ENCODE measurements at regions of chr10 and their contacts with region 1.

Region 1: DNA sequence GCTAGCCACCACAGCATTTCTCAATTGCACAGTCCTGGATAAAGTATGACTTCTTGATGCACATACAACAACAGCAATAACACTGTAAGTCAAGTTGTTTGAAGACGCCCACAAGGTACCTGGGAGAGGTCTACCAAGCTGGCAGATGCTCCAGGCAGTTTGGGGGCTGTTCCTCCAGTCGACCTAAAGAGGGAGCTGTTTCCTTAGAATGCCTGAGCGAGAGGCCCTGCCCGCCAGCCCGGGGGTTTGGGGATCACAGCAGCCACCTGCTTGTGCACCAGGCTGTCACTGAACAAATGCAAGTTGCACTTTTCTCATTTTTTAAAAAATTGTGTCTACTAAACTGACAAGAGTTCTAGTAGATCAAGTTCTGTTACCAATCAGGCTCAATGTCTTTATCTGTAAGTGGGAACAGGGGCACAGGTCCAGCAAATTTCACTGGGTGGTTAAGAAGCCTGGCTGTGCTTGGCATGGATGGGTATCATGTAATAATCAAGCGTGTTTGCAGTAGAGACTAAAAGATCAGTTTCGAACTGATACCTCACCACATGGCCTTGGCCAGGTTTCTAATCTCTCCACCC is 193.8 kb upstream of the ADO start:
- DNase-seq: peak; percentile 47
- ATAC-seq: peak; percentile 83
- H3K4me3 ChIP-seq: no peak overlapping the region
- H3K27ac ChIP-seq: no peak overlapping the region
- H3K4me1 ChIP-seq: peaks cover 9% of the 10 kb centered on the region
- H3K27me3 ChIP-seq: no peaks in the 10 kb centered on the region
- CTCF ChIP-seq: peak; percentile 87
- POLR2A ChIP-seq: no peak
- RAD21 ChIP-seq: peak; percentile 92

Region 2: GRCh38 chr10:62811159-62811875 is 200.6 kb after region 1 on chr10:
- CTCF ChIA-PET with region 1: interaction called, 18 read pairs
- POLR2A ChIA-PET with region 1: no interaction called
- dilution Hi-C with region 1: no loop called
- in situ Hi-C with region 1: loop called (anchors 5 kb)
- intact Hi-C with region 1: no loop called
- DNase-seq: no peak
- ATAC-seq: no peak
- H3K4me3 ChIP-seq: no peak overlapping the region
- H3K27ac ChIP-seq: no peak overlapping the region
- H3K4me1 ChIP-seq: peaks cover 7% of the 10 kb centered on the region; the same call in 1 of the 2 replicates
- H3K27me3 ChIP-seq: peaks cover 22% of the 10 kb centered on the region
- CTCF ChIP-seq: no peak
- POLR2A ChIP-seq: peak; percentile 0; the same call in 1 of the 2 replicates
- RAD21 ChIP-seq: no peak

Region 3: GRCh38 chr10:62816331-62817120 is 205.8 kb after region 1 on chr10 and contains the start of gene EGR2:
- CTCF ChIA-PET with region 1: interaction called, 18 read pairs
- POLR2A ChIA-PET with region 1: interaction called, 9 read pairs
- dilution Hi-C with region 1: no loop called
- in situ Hi-C with region 1: loop called (anchors 5 kb)
- intact Hi-C with region 1: loop called (anchors 1 kb)
- DNase-seq: peak; percentile 94
- ATAC-seq: peak; percentile 91
- H3K4me3 ChIP-seq: peak within 1 kb of the TSS; percentile 73
- H3K27ac ChIP-seq: peak within 1 kb of the TSS; percentile 53
- H3K4me1 ChIP-seq: peaks cover 7% of the 10 kb centered on the region; the same call in 1 of the 2 replicates
- H3K27me3 ChIP-seq: peaks cover 48% of the 10 kb centered on the region
- CTCF ChIP-seq: no peak
- POLR2A ChIP-seq: peak; percentile 50
- RAD21 ChIP-seq: no peak
- total RNA-seq, gene EGR2: 0.36 and 0.56 TPM in 2 replicates

Region 4: GRCh38 chr10:63083904-63084689 is 473.4 kb after region 1 on chr10:
- CTCF ChIA-PET with region 1: interaction called, 7 read pairs
- POLR2A ChIA-PET with region 1: no interaction called
- dilution Hi-C with region 1: no loop called
- in situ Hi-C with region 1: no loop called
- intact Hi-C with region 1: loop called (anchors 1 kb)
- DNase-seq: peak; percentile 77
- ATAC-seq: peak; percentile 95
- H3K4me3 ChIP-seq: no peak overlapping the region
- H3K27ac ChIP-seq: no peak overlapping the region
- H3K4me1 ChIP-seq: no peaks in the 10 kb centered on the region; the same call in 1 of the 2 replicates
- H3K27me3 ChIP-seq: no peaks in the 10 kb centered on the region; the same call in 1 of the 2 replicates
- CTCF ChIP-seq: peak; percentile 74
- POLR2A ChIP-seq: no peak
- RAD21 ChIP-seq: peak; percentile 81

Region 5: GRCh38 chr10:63166742-63167258 is 556.1 kb after region 1 on chr10:
- CTCF ChIA-PET with region 1: no interaction called
- POLR2A ChIA-PET with region 1: no interaction called
- dilution Hi-C with region 1: loop called (anchors 25 kb)
- in situ Hi-C with region 1: no loop called
- intact Hi-C with region 1: loop called (anchors 2 kb)
- DNase-seq: peak; percentile 85
- ATAC-seq: peak; percentile 73
- H3K4me3 ChIP-seq: no peak overlapping the region
- H3K27ac ChIP-seq: no peak overlapping the region
- H3K4me1 ChIP-seq: 0 out of 2 replicates have a peak, but pooled peaks cover 2% of the 10 kb centered on the region
- H3K27me3 ChIP-seq: no peaks in the 10 kb centered on the region
- CTCF ChIP-seq: peak; percentile 82
- POLR2A ChIP-seq: no peak
- RAD21 ChIP-seq: peak; percentile 78

Measured in IMR-90 (cell line).